ENCODE measurements at regions of chr11 and their contacts with region 1.

Region 1: GRCh38 chr11:119101759-119102423 is at the start of gene DPAGT1:
- DNase-seq: peak; percentile 78

Region 2: GRCh38 chr11:119115484-119116234 is 13.8 kb after region 1 on chr11:
- CTCF ChIA-PET with region 1: interaction called, 4 read pairs
- POLR2A ChIA-PET with region 1: interaction called, 67 read pairs
- DNase-seq: no peak

Region 3: GRCh38 chr11:119121008-119121810 is 19.3 kb after region 1 on chr11 and contains the start of gene HINFP:
- CTCF ChIA-PET with region 1: interaction called, 4 read pairs
- POLR2A ChIA-PET with region 1: interaction called, 67 read pairs
- DNase-seq: peak; percentile 99

Region 4: GRCh38 chr11:119168471-119169281 is 66.8 kb after region 1 on chr11 and contains the start of gene NLRX1:
- CTCF ChIA-PET with region 1: interaction called, 5 read pairs
- POLR2A ChIA-PET with region 1: interaction called, 10 read pairs
- DNase-seq: peak; percentile 98